CD8-positive, alpha-beta T cell (primary cell): ENCODE measurements at regions of chr12 and their contacts with region 1.

Region 1: DNA sequence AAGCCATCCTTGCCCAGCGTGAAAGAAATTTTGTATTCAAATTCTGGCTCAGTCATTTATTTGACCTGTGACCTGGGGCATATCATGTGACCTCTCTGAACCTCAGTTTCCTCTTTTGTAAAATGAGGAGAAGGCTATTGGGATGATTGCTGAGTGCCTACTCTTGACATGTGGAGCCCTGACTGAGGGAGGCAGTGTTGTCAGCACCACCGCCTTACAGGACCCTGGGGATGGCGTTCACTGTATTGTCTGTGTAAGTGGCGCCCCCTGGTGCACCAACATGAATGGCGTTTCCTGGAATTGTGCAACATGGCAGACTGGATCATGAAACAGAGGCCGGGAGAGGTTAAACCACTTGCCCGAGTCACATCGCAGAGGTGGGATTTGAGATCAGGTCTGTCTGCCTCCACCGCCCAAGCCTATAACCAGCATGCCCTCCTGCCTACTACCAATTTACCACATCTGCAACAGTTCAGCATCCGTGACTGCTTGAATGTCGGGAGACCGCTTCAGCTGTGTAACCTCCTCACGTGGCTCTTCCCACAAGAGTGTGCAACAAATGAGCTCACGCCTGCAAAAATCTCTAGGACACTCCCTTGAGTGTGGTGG is 20.1 kb upstream of the CCDC63 start:
- DNase-seq: peak; percentile 64 to 85 (median 78)
- ATAC-seq: peak; percentile 95
- H3K4me3 ChIP-seq: no peak overlapping the region
- H3K4me3 Mint-ChIP-seq: peak overlapping the region; percentile 65
- H3K27ac ChIP-seq: no peak overlapping the region
- H3K27ac Mint-ChIP-seq: no peak overlapping the region
- H3K4me1 ChIP-seq: no peaks in the 10 kb centered on the region
- H3K4me1 Mint-ChIP-seq: peaks cover 5% of the 10 kb centered on the region
- H3K27me3 ChIP-seq: no peaks in the 10 kb centered on the region
- H3K27me3 Mint-ChIP-seq: peaks cover 9% of the 10 kb centered on the region
- CTCF ChIP-seq: peak; percentile 80

Region 2: DNA sequence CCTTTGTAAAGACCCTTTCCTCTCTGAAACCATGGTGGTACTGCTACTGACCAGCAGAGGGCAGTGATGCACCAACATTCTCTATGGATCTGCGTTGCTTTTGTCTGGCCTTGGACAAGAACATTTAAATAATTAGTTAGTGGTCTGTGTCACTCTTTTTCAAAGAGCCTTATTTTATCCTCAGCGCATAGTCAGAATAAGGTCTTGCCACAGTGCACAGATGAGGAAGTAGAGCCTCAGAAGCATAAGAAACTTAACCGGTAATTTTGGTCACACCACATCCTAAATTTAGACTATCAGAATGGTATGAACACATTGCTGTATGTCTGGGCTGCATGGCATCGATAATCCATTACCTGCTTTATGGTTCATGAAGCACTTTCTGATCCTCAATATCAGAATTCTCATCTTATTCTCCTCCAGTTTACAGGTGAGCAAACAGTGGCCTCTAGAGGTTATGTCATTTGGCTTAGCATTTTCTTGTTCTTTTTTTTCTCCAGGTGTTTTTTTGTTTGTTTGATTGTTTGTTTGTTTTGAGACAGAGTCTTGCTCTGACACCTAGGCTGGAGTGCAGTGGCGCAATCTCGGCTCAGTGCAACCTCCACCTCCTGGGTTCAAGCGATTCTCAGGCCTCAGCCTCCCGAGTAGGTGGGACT is 726.3 kb before region 1 on chr12:
- CTCF ChIA-PET with region 1: no interaction called
- POLR2A ChIA-PET with region 1: no interaction called
- intact Hi-C with region 1: loop called (anchors 2 to 5 kb)
- DNase-seq: peak; percentile 15 to 82 (median 66)
- ATAC-seq: peak; percentile 85
- H3K4me3 ChIP-seq: no peak overlapping the region
- H3K4me3 Mint-ChIP-seq: no peak overlapping the region
- H3K27ac ChIP-seq: peak overlapping the region in 1 of 2 experiments; percentile 21
- H3K27ac Mint-ChIP-seq: peak overlapping the region; percentile 24
- H3K4me1 ChIP-seq: peaks cover 4% of the 10 kb centered on the region
- H3K4me1 Mint-ChIP-seq: peaks cover 7% of the 10 kb centered on the region
- H3K27me3 ChIP-seq: no peaks in the 10 kb centered on the region
- H3K27me3 Mint-ChIP-seq: no peaks in the 10 kb centered on the region
- CTCF ChIP-seq: peak; percentile 99

Region 3: DNA sequence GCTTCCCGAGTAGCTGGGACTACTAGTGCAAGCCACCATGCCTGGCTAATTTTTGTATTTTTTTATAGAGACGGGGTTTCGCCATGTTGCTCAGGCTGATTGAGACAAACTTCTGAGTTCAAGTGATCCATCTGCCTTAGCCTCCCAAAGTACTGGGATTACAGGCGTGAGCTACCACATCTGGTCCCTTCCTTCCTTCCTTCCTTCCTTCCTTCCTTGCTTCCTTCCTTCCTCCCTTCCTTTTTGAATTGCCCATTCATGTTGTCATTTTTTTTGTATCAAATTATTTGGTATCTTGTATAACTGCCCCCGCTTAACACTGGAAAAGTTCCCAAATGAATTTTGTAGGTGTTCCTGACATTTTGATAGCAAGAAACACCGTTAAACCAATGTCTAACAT is 312.9 kb before region 1 on chr12:
- CTCF ChIA-PET with region 1: interaction called, 3 read pairs
- POLR2A ChIA-PET with region 1: no interaction called
- intact Hi-C with region 1: loop called in 1 of 2 experiments (anchors 10 kb)
- DNase-seq: no peak
- ATAC-seq: no peak
- H3K4me3 ChIP-seq: no peak overlapping the region
- H3K4me3 Mint-ChIP-seq: no peak overlapping the region
- H3K27ac ChIP-seq: no peak overlapping the region
- H3K27ac Mint-ChIP-seq: no peak overlapping the region
- H3K4me1 ChIP-seq: no peaks in the 10 kb centered on the region
- H3K4me1 Mint-ChIP-seq: no peaks in the 10 kb centered on the region
- H3K27me3 ChIP-seq: no peaks in the 10 kb centered on the region
- H3K27me3 Mint-ChIP-seq: no peaks in the 10 kb centered on the region
- CTCF ChIP-seq: no peak

Region 4: GRCh38 chr12:110555577-110556406 is 270.9 kb before region 1 on chr12:
- CTCF ChIA-PET with region 1: interaction called, 3 read pairs
- POLR2A ChIA-PET with region 1: no interaction called
- intact Hi-C with region 1: loop called in 1 of 2 experiments (anchors 2 kb)
- DNase-seq: no peak
- ATAC-seq: no peak
- H3K4me3 ChIP-seq: no peak overlapping the region
- H3K4me3 Mint-ChIP-seq: no peak overlapping the region
- H3K27ac ChIP-seq: no peak overlapping the region
- H3K27ac Mint-ChIP-seq: peak overlapping the region; percentile 24
- H3K4me1 ChIP-seq: peaks cover 24% of the 10 kb centered on the region
- H3K4me1 Mint-ChIP-seq: peaks cover 49% of the 10 kb centered on the region
- H3K27me3 ChIP-seq: no peaks in the 10 kb centered on the region
- H3K27me3 Mint-ChIP-seq: no peaks in the 10 kb centered on the region
- CTCF ChIP-seq: no peak

Region 5: DNA sequence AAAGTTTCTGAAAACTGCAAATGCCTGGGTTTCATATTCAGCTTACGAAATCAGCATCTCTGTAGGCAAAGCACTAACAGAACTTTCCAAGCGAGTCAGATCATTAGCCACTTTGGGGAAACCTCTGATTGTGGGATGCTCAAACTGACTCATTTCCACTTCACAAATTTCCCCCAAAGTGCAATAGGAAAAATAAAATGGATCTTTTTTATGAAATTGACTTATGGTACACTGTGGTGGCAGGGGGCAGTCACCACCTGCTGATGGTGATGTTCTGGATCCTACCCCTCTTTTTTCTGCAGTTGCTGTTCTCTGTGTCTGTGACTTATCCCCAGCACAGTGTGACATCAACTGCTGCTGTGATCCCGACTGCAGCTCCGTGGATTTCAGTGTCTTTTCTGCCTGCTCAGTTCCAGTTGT is 207.2 kb before region 1 on chr12:
- CTCF ChIA-PET with region 1: interaction called, 3 read pairs
- POLR2A ChIA-PET with region 1: no interaction called
- intact Hi-C with region 1: loop called in 1 of 2 experiments (anchors 5 kb)
- DNase-seq: peak in 3 of 9 experiments; percentile 19 to 52 (median 34)
- ATAC-seq: peak; percentile 44
- H3K4me3 ChIP-seq: no peak overlapping the region
- H3K4me3 Mint-ChIP-seq: no peak overlapping the region
- H3K27ac ChIP-seq: no peak overlapping the region
- H3K27ac Mint-ChIP-seq: no peak overlapping the region
- H3K4me1 ChIP-seq: peaks cover 1% of the 10 kb centered on the region
- H3K4me1 Mint-ChIP-seq: peaks cover 2% of the 10 kb centered on the region
- H3K27me3 ChIP-seq: no peaks in the 10 kb centered on the region
- H3K27me3 Mint-ChIP-seq: no peaks in the 10 kb centered on the region
- CTCF ChIP-seq: no peak